Activated T-helper 1 cell treated with anti-CD3 and anti-CD28 coated beads, Interleukin-12 subunit alpha, Interleukin-12 subunit beta, Interleukin-2, Interleukin-4 antibody, amounts not matched to agents 30 ng/mL and 10 ng/mL and 1 ng/mL, durations not matched to agents 14 hours and 24 hours and 36 hours (primary cell): ENCODE measurements at regions of chr20 and their contacts with region 1.

Region 1: DNA sequence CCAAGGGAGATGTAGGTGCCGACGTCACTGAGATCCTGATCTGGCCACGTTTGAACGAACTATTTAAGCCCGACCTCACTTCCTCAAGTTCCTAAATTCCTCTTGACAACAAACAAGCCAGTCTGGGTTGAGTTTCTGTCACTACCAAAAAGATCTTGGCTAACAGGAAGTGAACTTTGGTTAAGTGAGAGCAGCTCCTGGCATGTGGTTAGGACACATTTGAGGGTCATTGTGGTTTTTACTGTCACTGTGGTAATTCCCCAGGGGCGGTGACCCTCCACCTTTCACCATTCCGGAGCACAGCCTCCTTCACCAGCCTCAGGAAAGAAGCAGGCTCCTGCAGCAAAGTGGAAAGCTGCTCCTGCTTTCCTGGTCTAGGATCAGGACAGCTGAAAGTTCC is 43.1 kb upstream of the ZNF831 start:
- DNase-seq: peak; percentile 8
- H3K4me3 Mint-ChIP-seq: peak overlapping the region; percentile 24
- H3K27ac Mint-ChIP-seq: peak overlapping the region; percentile 53
- H3K4me1 Mint-ChIP-seq: peaks cover 61% of the 10 kb centered on the region
- H3K27me3 Mint-ChIP-seq: peaks cover 2% of the 10 kb centered on the region

Region 2: GRCh38 chr20:59102841-59103299 is 17.6 kb before region 1 on chr20:
- intact Hi-C with region 1: loop called (anchors 2 kb)
- DNase-seq: no peak
- H3K4me3 Mint-ChIP-seq: no peak overlapping the region
- H3K27ac Mint-ChIP-seq: peak overlapping the region; percentile 10
- H3K4me1 Mint-ChIP-seq: peaks cover 12% of the 10 kb centered on the region
- H3K27me3 Mint-ChIP-seq: peaks cover 5% of the 10 kb centered on the region

Region 3: DNA sequence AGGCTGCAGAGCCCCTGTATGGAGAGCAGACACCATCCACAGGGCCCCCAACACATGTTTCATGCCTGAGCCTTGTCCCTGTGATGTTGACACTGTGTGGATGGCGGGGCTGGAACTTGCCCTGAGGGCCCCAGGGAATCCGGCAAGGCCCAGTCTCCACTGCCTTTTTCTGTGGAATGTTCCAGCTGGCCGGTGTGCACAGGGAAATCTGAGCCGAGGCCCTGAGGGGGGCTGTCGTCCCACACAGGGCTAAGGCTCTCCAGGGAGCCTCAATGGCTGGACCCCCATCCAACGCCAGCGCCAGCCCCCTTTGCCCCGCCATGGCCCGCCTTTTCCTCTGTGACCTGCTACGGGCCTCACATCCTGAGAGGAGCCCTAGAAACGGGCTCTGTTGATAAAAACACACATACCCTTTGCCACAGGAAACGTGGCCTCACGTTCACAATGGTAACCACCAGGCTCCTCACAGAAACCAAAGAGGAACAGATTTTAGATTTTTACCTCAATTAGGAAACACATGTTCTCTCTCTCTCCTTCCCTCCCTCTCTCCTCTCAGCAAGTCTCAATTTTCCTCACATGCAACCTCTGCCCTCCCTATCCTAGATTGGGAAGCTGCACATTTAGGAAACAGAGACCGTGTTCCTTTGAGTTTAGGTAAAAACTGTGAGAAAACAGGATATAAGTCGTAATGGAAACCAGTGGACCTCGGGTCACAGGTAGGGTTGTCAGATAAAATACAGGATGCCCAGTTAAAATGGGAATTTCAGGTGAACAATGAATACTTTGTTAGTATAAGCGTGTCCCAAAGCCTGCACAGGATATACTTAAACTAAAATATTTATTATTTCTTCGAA is 29.4 kb after region 1 on chr20:
- intact Hi-C with region 1: loop called (anchors 1 kb)
- DNase-seq: peak; percentile 72
- H3K4me3 Mint-ChIP-seq: peak overlapping the region; percentile 57
- H3K27ac Mint-ChIP-seq: peak overlapping the region; percentile 92
- H3K4me1 Mint-ChIP-seq: peaks cover 72% of the 10 kb centered on the region
- H3K27me3 Mint-ChIP-seq: no peaks in the 10 kb centered on the region

Region 4: DNA sequence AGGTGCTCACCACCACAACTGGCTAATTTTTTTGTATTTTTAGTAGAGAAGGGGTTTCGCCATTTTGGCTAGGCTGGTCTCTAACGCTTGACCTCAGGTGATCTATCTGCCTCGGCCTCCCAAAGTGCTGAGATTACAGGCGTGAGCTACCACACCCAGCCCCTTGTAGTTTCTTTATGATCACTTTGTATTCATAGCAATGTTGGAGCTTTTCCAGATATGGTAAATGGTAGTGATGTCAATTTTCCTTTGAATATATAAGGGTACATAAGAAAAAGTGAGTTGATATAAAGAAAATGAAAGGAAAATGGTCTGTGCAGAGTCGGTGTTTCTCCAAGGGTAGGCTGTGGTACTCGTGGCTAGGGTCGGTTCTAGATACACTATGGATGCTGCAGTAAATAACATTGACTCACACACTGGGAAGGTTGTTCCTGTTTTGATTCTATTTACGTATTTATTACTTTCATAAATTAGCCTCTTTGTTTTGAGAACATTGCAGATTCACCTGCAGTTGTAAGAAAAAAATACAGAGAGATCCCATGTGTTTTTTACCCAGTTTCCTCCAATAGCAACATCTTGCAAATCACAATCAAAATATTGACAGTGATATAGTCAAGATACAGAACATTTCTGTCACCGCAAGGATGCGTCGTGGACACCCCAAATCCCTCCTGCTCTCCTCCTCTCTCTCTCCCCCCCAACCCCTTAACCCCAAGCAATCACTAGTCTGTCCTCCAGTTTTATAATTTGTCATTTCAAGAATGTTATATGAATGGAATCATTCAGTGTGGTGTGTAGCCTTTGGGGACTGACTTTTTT is 45.6 kb after region 1 on chr20:
- intact Hi-C with region 1: loop called (anchors 1 kb)
- DNase-seq: no peak
- H3K4me3 Mint-ChIP-seq: peak overlapping the region; percentile 88
- H3K27ac Mint-ChIP-seq: peak overlapping the region; percentile 98
- H3K4me1 Mint-ChIP-seq: peaks cover 88% of the 10 kb centered on the region
- H3K27me3 Mint-ChIP-seq: no peaks in the 10 kb centered on the region

Region 5: DNA sequence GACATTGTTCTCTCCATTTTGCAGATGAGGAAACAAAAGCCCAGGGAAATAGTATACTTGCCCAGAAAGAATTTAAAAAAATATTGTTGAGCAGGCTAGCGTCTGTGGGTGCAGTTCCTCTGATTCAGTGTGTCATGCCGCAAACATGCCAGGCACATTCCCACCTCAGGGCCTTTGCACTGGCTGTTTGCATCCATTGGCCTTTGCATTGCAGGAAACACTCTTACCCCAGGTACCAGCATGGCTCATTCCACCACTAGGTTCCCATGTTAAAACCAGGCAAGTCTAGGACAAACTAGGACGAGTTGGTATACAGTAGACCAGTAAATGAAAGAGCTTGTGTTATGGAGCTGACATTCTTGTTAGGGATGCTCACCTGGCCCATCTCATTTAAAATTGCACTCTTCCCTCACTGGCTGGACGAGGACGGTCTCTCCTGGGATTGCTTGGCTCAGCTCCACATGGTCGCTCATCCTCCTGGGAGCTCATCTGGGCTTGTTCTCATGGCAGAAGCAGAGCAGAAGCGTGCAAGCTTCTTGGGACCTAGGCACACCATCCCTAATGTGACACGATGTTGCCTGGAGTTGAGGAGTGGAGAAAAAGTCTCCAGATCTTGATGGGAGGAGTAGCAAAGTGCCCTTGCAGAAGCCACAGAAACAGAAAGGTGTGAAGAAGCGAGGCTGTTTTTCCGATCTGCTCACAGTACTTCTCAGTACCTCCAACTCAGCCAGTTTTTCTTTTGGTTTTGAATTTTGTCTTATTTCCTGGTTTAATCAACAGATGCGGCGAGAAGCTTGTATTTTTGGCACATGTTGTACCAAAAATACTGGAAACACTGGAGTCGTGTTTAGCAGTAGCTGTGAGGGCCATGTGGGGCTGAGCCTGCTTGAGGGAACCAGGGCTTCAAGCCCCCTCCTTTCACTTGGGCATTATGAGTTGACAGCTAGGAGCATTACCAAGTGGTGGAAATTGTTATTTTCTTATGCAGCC is 57.1 kb after region 1 on chr20:
- intact Hi-C with region 1: loop called (anchors 1 kb)
- DNase-seq: peak; percentile 50
- H3K4me3 Mint-ChIP-seq: peak overlapping the region; percentile 74
- H3K27ac Mint-ChIP-seq: peak overlapping the region; percentile 96
- H3K4me1 Mint-ChIP-seq: peaks cover 67% of the 10 kb centered on the region
- H3K27me3 Mint-ChIP-seq: no peaks in the 10 kb centered on the region